ENCODE measurements at regions of chr15 and their contacts with region 1.

Region 1: GRCh38 chr15:74964794-74965193 is 8.2 kb upstream of the RPP25 start:
- DNase-seq: peak; percentile 67
- ATAC-seq: peak; percentile 66
- H3K4me3 ChIP-seq: no peak overlapping the region
- H3K27ac ChIP-seq: peak overlapping the region; percentile 28; the same call in 1 of the 2 replicates
- H3K4me1 ChIP-seq: peaks cover 11% of the 10 kb centered on the region
- H3K27me3 ChIP-seq: no peaks in the 10 kb centered on the region
- CTCF ChIP-seq: no peak

Region 2: GRCh38 chr15:75023181-75023871 is 58.5 kb after region 1 on chr15 and contains the start of gene PPCDC:
- CTCF ChIA-PET with region 1: no interaction called
- POLR2A ChIA-PET with region 1: no interaction called
- intact Hi-C with region 1: no loop called
- DNase-seq: peak; percentile 97
- ATAC-seq: peak; percentile 99
- H3K4me3 ChIP-seq: peak within 1 kb of the TSS; percentile 95
- H3K27ac ChIP-seq: peak within 1 kb of the TSS; percentile 59
- H3K4me1 ChIP-seq: peaks cover 17% of the 10 kb centered on the region
- H3K27me3 ChIP-seq: no peaks in the 10 kb centered on the region
- CTCF ChIP-seq: no peak
- total RNA-seq, gene PPCDC: 31.0 and 31.5 TPM in 2 replicates

Region 3: GRCh38 chr15:75224281-75224680 is 259.5 kb after region 1 on chr15:
- CTCF ChIA-PET with region 1: no interaction called
- POLR2A ChIA-PET with region 1: interaction called, 11 read pairs
- intact Hi-C with region 1: no loop called
- DNase-seq: no peak
- ATAC-seq: no peak
- H3K4me3 ChIP-seq: no peak overlapping the region
- H3K27ac ChIP-seq: no peak overlapping the region
- H3K4me1 ChIP-seq: no peaks in the 10 kb centered on the region
- H3K27me3 ChIP-seq: no peaks in the 10 kb centered on the region
- CTCF ChIP-seq: no peak

Measured in PC-3 (cell line).